Activated CD8-positive, alpha-beta memory T cell treated with anti-CD3 and anti-CD28 coated beads, Interleukin-2, amount 10 ng/mL, durations not matched to agents 7 days and 5 days (primary cell): ENCODE measurements at regions of chr10 and their contacts with region 1.

Region 1: GRCh38 chr10:70115948-70116682 is 16.5 kb downstream of the AIFM2 start:
- DNase-seq: peak; percentile 67
- ATAC-seq: peak; percentile 79
- H3K4me3 Mint-ChIP-seq: no peak overlapping the region
- H3K27ac Mint-ChIP-seq: no peak overlapping the region
- H3K4me1 Mint-ChIP-seq: peaks cover 11% of the 10 kb centered on the region
- H3K27me3 Mint-ChIP-seq: no peaks in the 10 kb centered on the region

Region 2: GRCh38 chr10:70063418-70064098 is 52.6 kb before region 1 on chr10:
- CTCF ChIA-PET with region 1: interaction called, 11 read pairs
- DNase-seq: peak; percentile 73
- ATAC-seq: peak; percentile 84
- H3K4me3 Mint-ChIP-seq: peak overlapping the region; percentile 34
- H3K27ac Mint-ChIP-seq: peak overlapping the region; percentile 63
- H3K4me1 Mint-ChIP-seq: peaks cover 16% of the 10 kb centered on the region
- H3K27me3 Mint-ChIP-seq: no peaks in the 10 kb centered on the region

Region 3: GRCh38 chr10:70084189-70084588 is 31.9 kb before region 1 on chr10:
- CTCF ChIA-PET with region 1: interaction called, 11 read pairs
- DNase-seq: no peak
- ATAC-seq: no peak
- H3K4me3 Mint-ChIP-seq: no peak overlapping the region
- H3K27ac Mint-ChIP-seq: no peak overlapping the region
- H3K4me1 Mint-ChIP-seq: no peaks in the 10 kb centered on the region
- H3K27me3 Mint-ChIP-seq: peaks cover 2% of the 10 kb centered on the region

Region 4: DNA sequence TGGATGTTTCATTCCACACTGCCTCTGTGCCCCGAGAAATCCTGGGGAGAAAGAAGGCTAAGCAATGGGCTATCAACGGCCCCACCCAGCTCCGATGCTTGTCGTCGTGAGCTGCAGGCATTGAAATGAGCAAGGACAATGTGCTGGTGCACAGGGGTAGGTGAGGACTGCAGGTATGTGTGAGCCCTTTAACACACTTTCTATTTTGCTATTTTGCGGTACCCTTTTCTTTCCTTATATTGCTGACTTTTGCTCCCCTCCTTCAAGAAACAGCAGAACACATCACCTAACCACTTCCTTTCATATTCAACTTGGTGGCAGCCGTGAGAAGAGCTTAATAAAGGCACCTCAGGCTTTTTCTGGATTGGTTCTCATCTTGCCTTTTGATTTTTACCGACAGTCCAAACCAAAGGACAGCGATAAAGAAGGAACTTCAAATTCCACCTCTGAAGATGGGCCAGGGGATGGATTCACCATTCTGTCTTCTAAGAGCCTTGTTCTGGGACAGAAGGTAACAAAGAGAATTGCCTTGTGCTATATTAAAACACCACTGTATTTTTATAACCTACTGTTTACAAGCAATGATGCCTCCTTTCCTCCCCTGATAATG is 22.7 kb before region 1 on chr10:
- CTCF ChIA-PET with region 1: interaction called, 90 read pairs
- DNase-seq: peak; percentile 71
- ATAC-seq: peak; percentile 81
- H3K4me3 Mint-ChIP-seq: peak overlapping the region; percentile 80
- H3K27ac Mint-ChIP-seq: peak overlapping the region; percentile 89
- H3K4me1 Mint-ChIP-seq: peaks cover 37% of the 10 kb centered on the region
- H3K27me3 Mint-ChIP-seq: no peaks in the 10 kb centered on the region

Region 5: DNA sequence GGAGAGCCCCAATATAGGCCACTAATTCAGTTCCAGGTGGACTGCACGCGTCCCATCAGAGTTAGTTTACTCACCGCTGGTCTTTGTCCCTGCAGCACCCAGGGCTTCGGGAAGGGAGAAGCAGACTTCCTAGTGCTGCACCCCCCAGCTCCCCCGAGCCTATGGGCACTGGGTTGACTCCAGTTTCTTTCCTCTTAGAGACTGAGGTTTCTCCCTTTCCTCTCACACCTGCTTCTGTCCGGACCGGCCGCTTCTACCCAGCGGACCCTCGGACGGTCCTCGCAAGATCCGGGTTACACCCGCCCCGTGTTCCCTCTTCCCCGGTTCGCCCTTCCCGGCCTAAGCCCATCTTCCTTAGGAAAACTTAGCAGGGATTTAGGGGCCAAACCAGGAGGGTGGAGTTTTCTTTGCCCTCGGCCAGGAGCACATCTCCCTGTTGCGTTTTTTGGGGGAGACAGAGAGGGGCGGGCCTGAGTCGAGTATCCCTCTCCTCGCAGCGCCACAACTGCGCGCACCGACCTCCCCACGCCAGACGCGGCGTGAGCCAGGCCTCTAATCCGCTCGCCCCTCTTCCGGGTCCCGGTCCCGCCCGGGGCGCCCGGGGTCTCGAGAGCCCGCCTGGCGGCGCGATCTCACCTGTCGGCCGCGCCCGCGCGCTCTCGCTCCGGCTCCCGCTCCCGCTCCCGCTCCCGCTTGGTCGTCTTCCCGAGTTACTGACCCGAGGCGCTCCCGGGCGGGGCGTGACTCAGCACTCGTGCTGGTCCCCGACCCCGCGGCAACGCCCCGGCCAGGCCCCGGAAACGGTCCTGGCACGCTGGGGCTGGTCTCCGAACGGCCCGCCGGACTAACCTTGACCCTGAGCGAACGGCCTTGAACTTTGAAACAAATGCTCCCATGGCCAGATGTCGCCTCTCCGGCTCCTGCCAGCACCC is 16.2 kb after region 1 on chr10 and contains the start of gene AIFM2:
- CTCF ChIA-PET with region 1: interaction called, 15 read pairs
- DNase-seq: peak; percentile 65
- ATAC-seq: peak; percentile 94
- H3K4me3 Mint-ChIP-seq: peak within 1 kb of the TSS; percentile 83
- H3K27ac Mint-ChIP-seq: peak within 1 kb of the TSS; percentile 83
- H3K4me1 Mint-ChIP-seq: peaks cover 32% of the 10 kb centered on the region
- H3K27me3 Mint-ChIP-seq: no peaks in the 10 kb centered on the region
- total RNA-seq, gene AIFM2: 12.6 to 13.8 TPM

Region 6: DNA sequence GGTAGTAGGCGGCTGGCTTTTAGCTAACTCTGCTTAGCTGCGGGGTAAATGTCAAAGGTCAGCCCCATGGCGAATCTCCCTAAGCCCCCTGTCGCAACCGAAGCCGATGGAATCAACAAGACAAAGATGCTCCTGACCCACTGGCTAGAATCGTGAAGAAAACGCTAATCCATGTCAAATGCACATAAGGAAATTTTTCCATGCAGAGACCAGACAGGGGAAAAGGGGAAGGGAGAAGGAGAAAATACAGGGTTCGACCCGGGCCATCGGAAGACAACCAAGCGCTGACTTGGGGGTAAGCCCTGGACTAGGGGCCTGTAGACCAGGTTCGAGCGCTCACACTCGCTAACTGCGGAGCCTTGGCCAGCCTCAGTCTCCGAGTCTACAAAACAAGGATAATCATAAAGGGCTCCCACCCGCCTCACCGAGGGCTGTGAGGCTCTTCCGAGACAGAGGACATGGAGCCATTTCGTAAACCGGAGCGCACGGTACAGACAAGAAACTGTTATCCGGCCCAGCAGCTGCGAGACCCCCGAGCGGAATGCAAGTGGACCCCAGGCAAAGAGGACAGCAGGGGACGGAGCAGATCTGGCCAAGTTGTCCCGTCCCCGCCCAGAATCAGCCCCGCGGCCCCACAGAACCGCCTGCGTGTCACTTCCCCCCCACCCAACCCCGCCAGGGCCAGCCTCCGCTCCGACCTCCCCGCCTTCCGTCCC is 53.7 kb after region 1 on chr10:
- CTCF ChIA-PET with region 1: interaction called, 11 read pairs
- DNase-seq: no peak
- ATAC-seq: peak; percentile 4
- H3K4me3 Mint-ChIP-seq: peak overlapping the region; percentile 88
- H3K27ac Mint-ChIP-seq: peak overlapping the region; percentile 93
- H3K4me1 Mint-ChIP-seq: peaks cover 68% of the 10 kb centered on the region
- H3K27me3 Mint-ChIP-seq: no peaks in the 10 kb centered on the region